Activated T-helper 2 cell treated with anti-CD3 and anti-CD28 coated beads, Interferon-gamma antibody, Interleukin-2, Interleukin-4, amounts not matched to agents 10 μg/mL and 5 μg/mL and 100 μg/mL, durations not matched to agents 14 hours and 24 hours and 36 hours (primary cell): ENCODE measurements at regions of chr2 and their contacts with region 1.

Region 1: DNA sequence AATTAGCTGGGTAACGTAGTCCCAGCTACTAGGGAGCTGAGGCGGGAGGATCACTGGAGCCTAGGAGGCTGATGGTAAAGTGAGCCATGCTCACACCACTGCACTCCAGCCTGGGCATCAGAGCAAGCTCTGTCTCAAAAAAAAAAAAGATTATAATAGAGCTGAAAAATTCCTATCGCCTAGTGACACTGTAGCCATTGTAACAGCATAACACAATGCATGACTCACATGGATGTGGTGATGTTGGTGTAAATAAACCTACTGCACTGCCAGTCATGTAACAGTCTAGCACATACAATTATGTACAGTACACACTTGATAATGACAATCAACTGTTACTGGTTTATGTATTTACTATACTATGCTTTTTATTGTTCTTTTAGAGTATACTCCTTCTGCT is 39.6 kb downstream of the MGAT4A start:
- DNase-seq: no peak
- H3K4me3 Mint-ChIP-seq: no peak overlapping the region
- H3K27ac Mint-ChIP-seq: peak overlapping the region; percentile 29
- H3K4me1 Mint-ChIP-seq: peaks cover 52% of the 10 kb centered on the region
- H3K27me3 Mint-ChIP-seq: no peaks in the 10 kb centered on the region

Region 2: GRCh38 chr2:98649135-98649991 is 41.9 kb before region 1 on chr2:
- intact Hi-C with region 1: no loop called
- DNase-seq: peak; percentile 68
- H3K4me3 Mint-ChIP-seq: no peak overlapping the region
- H3K27ac Mint-ChIP-seq: peak overlapping the region; percentile 48
- H3K4me1 Mint-ChIP-seq: peaks cover 49% of the 10 kb centered on the region
- H3K27me3 Mint-ChIP-seq: no peaks in the 10 kb centered on the region

Region 3: DNA sequence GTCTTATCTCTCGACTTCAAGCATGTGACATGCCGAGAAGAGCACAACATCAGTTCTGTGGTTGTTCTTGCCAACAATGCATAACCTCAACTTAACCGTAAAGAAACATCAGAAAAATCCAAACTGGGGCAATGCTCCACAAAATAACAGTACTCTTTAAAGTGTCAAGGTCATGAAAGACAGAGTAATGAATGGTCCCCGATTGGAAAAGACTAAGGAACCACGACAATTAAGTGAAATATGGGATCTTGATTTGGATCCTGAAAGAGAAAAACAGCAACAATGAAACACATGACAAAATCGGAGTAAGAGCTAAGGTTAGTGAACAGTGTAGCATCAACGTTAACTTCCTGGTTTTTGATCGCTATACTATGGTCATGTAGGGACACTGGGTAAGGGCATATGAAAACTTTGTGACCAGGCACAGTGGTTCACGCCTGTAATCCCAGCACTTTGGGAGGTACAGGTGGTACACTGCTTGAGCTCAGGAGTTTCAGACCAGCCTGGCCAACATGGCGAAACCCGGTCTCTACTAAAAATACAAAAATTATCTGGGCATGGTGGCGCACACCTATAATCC is 27.7 kb before region 1 on chr2:
- intact Hi-C with region 1: loop called (anchors 1 kb)
- DNase-seq: peak; percentile 30
- H3K4me3 Mint-ChIP-seq: peak overlapping the region; percentile 83
- H3K27ac Mint-ChIP-seq: peak overlapping the region; percentile 99
- H3K4me1 Mint-ChIP-seq: peaks cover 64% of the 10 kb centered on the region
- H3K27me3 Mint-ChIP-seq: no peaks in the 10 kb centered on the region

Region 4: DNA sequence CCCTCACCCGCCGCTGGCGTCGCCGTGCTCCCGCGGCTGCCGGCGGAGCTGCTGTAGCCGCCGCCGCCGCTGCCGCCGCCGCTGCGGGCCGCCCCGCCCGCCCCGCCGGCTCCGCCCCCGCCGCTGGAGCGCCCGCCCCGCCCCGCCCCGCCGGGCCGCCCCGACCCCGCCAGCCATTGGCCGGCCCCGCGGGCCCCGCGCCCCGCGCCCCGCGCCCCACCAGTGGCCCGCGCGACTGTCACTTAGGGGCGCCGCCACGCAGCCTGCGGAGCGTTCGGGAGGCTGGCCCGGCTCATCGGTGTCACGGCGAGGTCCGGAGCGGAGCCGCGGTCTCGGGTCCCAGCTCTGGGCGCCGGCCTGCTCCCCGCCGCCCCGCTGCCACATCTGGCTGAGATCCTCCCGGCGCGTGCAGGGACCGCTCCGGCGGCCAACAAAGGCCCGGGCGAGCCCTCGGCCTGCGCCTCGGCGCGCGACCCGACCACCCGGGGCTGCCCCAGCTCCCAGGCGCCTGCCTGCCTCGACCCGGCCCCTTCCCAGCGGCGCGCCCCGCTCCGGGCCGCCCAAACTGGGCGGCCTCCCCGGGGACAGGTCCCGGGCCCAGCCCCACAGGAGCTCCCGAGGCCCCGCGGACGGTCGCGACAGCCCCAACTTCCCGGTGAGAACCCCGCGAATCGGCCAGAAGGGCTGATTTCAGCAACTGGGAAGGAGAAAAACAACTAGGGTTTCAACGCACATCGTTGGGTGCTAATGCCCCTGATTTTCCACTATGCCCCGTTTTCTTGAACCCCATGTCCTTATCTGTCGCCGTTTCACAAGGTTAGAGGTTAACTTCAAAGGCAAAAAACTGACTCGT is 40.0 kb after region 1 on chr2 and contains the start of gene MGAT4A:
- intact Hi-C with region 1: loop called (anchors 2 kb)
- DNase-seq: peak; percentile 76
- H3K4me3 Mint-ChIP-seq: peak within 1 kb of the TSS; percentile 88
- H3K27ac Mint-ChIP-seq: peak within 1 kb of the TSS; percentile 93
- H3K4me1 Mint-ChIP-seq: peaks cover 71% of the 10 kb centered on the region
- H3K27me3 Mint-ChIP-seq: no peaks in the 10 kb centered on the region
- total RNA-seq, gene MGAT4A: 42.0 and 44.6 TPM in 2 replicates

Region 5: GRCh38 chr2:98736464-98736889 is 45.2 kb after region 1 on chr2:
- intact Hi-C with region 1: loop called (anchors 2 kb)
- DNase-seq: peak; percentile 46
- H3K4me3 Mint-ChIP-seq: peak overlapping the region; percentile 20
- H3K27ac Mint-ChIP-seq: peak overlapping the region; percentile 62
- H3K4me1 Mint-ChIP-seq: peaks cover 60% of the 10 kb centered on the region
- H3K27me3 Mint-ChIP-seq: no peaks in the 10 kb centered on the region